ENCODE measurements at regions of chr11 and their contacts with region 1.

Region 1: GRCh38 chr11:102287964-102288724 is 29.1 kb upstream of the BIRC3 start:
- DNase-seq: peak; percentile 84
- ATAC-seq: peak; percentile 83
- H3K4me3 ChIP-seq: peak overlapping the region; percentile 27 to 70 (median 48)
- H3K4me3 Mint-ChIP-seq: peak overlapping the region; percentile 64
- H3K27ac ChIP-seq: peak overlapping the region in 1 of 2 donors; percentile 8
- H3K27ac Mint-ChIP-seq: peak overlapping the region; percentile 69
- H3K4me1 ChIP-seq: peaks cover 26 to 34% of the 10 kb centered on the region in 2 donors
- H3K4me1 Mint-ChIP-seq: peaks cover 46% of the 10 kb centered on the region
- H3K27me3 ChIP-seq: no peaks in the 10 kb centered on the region
- H3K27me3 Mint-ChIP-seq: no peaks in the 10 kb centered on the region
- CTCF ChIP-seq: peak; percentile 80

Region 2: DNA sequence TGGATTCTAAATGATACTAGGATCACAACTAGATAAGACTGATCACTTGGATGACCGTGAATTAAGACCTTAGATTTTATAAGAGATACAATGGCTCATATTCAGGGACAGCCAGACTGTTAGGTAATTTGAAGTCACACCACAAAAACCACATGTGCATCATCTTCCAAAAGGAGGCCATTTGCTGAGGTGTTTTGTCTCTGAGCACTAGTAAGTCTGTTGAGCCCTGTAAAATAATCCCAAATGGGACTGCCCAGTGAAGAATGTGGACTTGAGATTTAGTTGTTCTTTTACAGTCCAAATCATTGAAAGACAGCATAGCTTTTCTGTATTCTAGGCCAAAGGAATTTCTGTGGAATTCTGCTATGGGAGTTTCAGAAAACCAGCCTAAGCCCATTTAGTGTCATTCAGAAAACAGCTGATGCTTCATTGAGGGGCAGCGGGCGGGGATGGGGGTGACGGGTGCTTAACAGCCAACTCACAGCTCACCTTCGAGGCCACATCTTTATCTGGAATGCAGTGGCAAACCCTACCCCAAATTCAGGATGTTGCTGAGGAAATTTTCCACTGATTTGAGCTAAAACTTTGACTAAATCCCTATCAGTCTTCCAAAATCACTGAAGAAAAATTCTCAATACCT is 50.9 kb before region 1 on chr11:
- CTCF ChIA-PET with region 1: no interaction called
- POLR2A ChIA-PET with region 1: no interaction called
- intact Hi-C with region 1: no loop called
- DNase-seq: no peak
- ATAC-seq: no peak
- H3K4me3 ChIP-seq: no peak overlapping the region
- H3K4me3 Mint-ChIP-seq: no peak overlapping the region
- H3K27ac ChIP-seq: no peak overlapping the region
- H3K27ac Mint-ChIP-seq: no peak overlapping the region
- H3K4me1 ChIP-seq: peaks cover 0 to 8% of the 10 kb centered on the region in 2 donors
- H3K4me1 Mint-ChIP-seq: peaks cover 6% of the 10 kb centered on the region
- H3K27me3 ChIP-seq: peaks cover 0 to 14% (median 4%) of the 10 kb centered on the region in 4 experiments
- H3K27me3 Mint-ChIP-seq: peaks cover 42% of the 10 kb centered on the region
- CTCF ChIP-seq: no peak

Region 3: GRCh38 chr11:102268329-102269193 is 19.6 kb before region 1 on chr11:
- CTCF ChIA-PET with region 1: interaction called, 19 read pairs
- POLR2A ChIA-PET with region 1: no interaction called
- intact Hi-C with region 1: no loop called
- DNase-seq: peak; percentile 85
- ATAC-seq: peak; percentile 99
- H3K4me3 ChIP-seq: peak overlapping the region in 4 of 5 experiments; percentile 1 to 62 (median 36)
- H3K4me3 Mint-ChIP-seq: peak overlapping the region; percentile 78
- H3K27ac ChIP-seq: no peak overlapping the region
- H3K27ac Mint-ChIP-seq: peak overlapping the region; percentile 12
- H3K4me1 ChIP-seq: peaks cover 13 to 17% of the 10 kb centered on the region in 2 donors
- H3K4me1 Mint-ChIP-seq: peaks cover 23% of the 10 kb centered on the region
- H3K27me3 ChIP-seq: peaks cover 0 to 17% (median 11%) of the 10 kb centered on the region in 4 experiments
- H3K27me3 Mint-ChIP-seq: peaks cover 22% of the 10 kb centered on the region
- CTCF ChIP-seq: peak; percentile 31

Region 4: GRCh38 chr11:102323542-102324251 is 35.6 kb after region 1 on chr11:
- CTCF ChIA-PET with region 1: interaction called, 588 read pairs
- POLR2A ChIA-PET with region 1: interaction called, 105 read pairs
- intact Hi-C with region 1: loop called (anchors 1 kb)
- DNase-seq: no peak
- ATAC-seq: no peak
- H3K4me3 ChIP-seq: peak overlapping the region in 1 of 5 experiments; percentile 9
- H3K4me3 Mint-ChIP-seq: peak overlapping the region; percentile 32
- H3K27ac ChIP-seq: peak overlapping the region in 1 of 2 donors; percentile 98
- H3K27ac Mint-ChIP-seq: peak overlapping the region; percentile 65
- H3K4me1 ChIP-seq: peaks cover 38 to 50% of the 10 kb centered on the region in 2 donors
- H3K4me1 Mint-ChIP-seq: peaks cover 52% of the 10 kb centered on the region
- H3K27me3 ChIP-seq: no peaks in the 10 kb centered on the region
- H3K27me3 Mint-ChIP-seq: no peaks in the 10 kb centered on the region
- CTCF ChIP-seq: no peak

Region 5: DNA sequence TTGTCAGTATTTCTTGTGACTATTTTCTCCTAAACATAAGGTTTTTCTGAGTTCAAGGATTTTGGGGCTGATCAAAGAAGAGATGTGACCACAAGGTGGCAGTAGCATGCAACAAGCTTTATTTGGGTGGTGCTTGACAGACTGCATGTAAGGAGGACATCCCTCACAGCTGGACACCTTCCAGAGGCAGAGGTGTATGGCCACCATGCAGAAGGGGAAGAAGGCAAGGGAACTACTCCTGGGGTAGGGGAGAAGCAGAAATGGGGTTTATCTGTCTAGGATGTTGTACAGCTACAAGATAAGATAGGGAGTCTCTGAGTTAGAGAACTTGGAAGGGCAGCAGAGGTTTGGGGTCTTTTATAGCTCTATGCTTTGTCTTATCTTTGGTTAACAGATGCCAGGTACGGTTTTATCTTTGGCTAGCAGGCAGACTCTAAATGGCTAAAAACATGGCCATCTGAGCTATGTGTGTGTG is 53.7 kb after region 1 on chr11:
- CTCF ChIA-PET with region 1: interaction called, 295 read pairs
- POLR2A ChIA-PET with region 1: interaction called, 4 read pairs
- intact Hi-C with region 1: loop called (anchors 1 kb)
- DNase-seq: peak; percentile 84
- ATAC-seq: peak; percentile 48
- H3K4me3 ChIP-seq: no peak overlapping the region
- H3K4me3 Mint-ChIP-seq: no peak overlapping the region
- H3K27ac ChIP-seq: peak overlapping the region; percentile 19 to 75
- H3K27ac Mint-ChIP-seq: peak overlapping the region; percentile 43
- H3K4me1 ChIP-seq: peaks cover 14 to 16% of the 10 kb centered on the region in 2 donors
- H3K4me1 Mint-ChIP-seq: peaks cover 42% of the 10 kb centered on the region
- H3K27me3 ChIP-seq: no peaks in the 10 kb centered on the region
- H3K27me3 Mint-ChIP-seq: no peaks in the 10 kb centered on the region
- CTCF ChIP-seq: peak; percentile 80

Region 6: DNA sequence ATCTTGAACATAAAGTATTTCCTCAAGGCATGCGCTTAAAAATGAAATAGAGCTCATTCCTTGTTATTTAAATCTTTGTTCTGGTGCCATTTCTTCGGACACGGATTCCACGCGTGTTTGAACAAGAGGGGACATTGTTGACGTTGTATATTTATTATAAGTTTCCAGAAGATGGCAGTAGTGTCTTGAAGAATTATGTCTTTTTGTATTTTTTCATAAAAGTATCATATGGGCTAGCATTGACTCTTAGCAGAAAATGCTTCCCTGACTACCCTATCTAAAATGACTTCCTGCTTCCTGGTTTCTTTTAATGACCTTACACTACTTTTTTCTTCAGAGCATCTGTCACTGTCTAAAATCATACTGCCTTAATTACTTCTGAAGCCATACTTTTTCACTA is 79.2 kb after region 1 on chr11:
- CTCF ChIA-PET with region 1: interaction called, 20 read pairs
- POLR2A ChIA-PET with region 1: no interaction called
- intact Hi-C with region 1: loop called (anchors 1 kb)
- DNase-seq: peak; percentile 47
- ATAC-seq: no peak
- H3K4me3 ChIP-seq: no peak overlapping the region
- H3K4me3 Mint-ChIP-seq: no peak overlapping the region
- H3K27ac ChIP-seq: peak overlapping the region in 1 of 2 donors; percentile 48
- H3K27ac Mint-ChIP-seq: peak overlapping the region; percentile 1
- H3K4me1 ChIP-seq: no peaks in the 10 kb centered on the region
- H3K4me1 Mint-ChIP-seq: peaks cover 16% of the 10 kb centered on the region
- H3K27me3 ChIP-seq: no peaks in the 10 kb centered on the region
- H3K27me3 Mint-ChIP-seq: no peaks in the 10 kb centered on the region
- CTCF ChIP-seq: peak; percentile 61

Region 7: GRCh38 chr11:102410382-102410784 is 122.2 kb after region 1 on chr11:
- CTCF ChIA-PET with region 1: interaction called, 3 read pairs
- POLR2A ChIA-PET with region 1: interaction called, 11 read pairs
- intact Hi-C with region 1: no loop called
- DNase-seq: no peak
- ATAC-seq: no peak
- H3K4me3 ChIP-seq: no peak overlapping the region
- H3K4me3 Mint-ChIP-seq: no peak overlapping the region
- H3K27ac ChIP-seq: no peak overlapping the region
- H3K27ac Mint-ChIP-seq: no peak overlapping the region
- H3K4me1 ChIP-seq: peaks cover 6% of the 10 kb centered on the region in 2 donors
- H3K4me1 Mint-ChIP-seq: peaks cover 46% of the 10 kb centered on the region
- H3K27me3 ChIP-seq: no peaks in the 10 kb centered on the region
- H3K27me3 Mint-ChIP-seq: no peaks in the 10 kb centered on the region
- CTCF ChIP-seq: no peak

Region 8: DNA sequence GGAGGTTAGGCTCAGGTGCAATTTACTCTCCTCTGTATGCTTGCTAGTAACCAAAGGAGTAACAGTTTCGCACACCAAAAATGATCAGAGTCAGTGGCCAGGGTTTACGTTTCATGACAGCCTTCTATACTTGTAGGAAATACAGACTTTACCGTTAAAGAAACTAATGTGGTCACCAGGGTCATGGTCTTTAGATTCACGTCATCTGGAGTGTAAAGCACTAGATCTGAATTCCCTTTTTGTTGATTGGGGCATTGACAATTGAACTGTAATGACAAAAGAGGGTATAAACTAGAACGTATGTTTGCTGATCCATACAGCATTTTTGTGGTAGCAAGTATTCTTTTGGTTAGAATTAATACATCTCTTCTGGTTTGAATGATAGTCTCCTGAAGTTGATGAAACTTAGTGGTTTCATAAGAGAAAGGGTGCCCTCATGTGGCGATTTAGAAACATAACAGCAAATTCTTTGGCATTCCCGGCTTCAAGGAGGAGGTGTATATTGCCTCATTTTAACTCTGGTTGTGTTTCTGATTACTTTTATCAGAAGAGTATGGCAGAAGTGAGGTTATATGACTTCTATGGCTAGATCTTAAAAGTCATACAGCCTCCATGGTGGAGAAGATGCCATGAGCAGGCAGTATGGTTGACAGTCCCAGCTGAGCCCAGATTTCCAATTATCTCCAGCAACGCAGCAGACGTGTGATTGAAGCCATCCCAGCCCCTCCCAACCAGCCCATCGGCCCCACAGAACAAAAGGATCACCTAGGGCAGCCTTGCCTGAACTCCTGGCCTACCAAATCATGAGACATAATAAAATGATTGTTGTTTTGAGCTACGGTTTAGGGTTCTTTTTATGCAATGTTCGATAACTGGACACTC is 207.3 kb after region 1 on chr11:
- CTCF ChIA-PET with region 1: interaction called, 32 read pairs
- POLR2A ChIA-PET with region 1: no interaction called
- intact Hi-C with region 1: loop called (anchors 1 kb)
- DNase-seq: peak; percentile 86
- ATAC-seq: peak; percentile 73
- H3K4me3 ChIP-seq: no peak overlapping the region
- H3K4me3 Mint-ChIP-seq: peak overlapping the region; percentile 55
- H3K27ac ChIP-seq: no peak overlapping the region
- H3K27ac Mint-ChIP-seq: peak overlapping the region; percentile 50
- H3K4me1 ChIP-seq: peaks cover 0 to 7% of the 10 kb centered on the region in 2 donors
- H3K4me1 Mint-ChIP-seq: peaks cover 14% of the 10 kb centered on the region
- H3K27me3 ChIP-seq: no peaks in the 10 kb centered on the region
- H3K27me3 Mint-ChIP-seq: no peaks in the 10 kb centered on the region
- CTCF ChIP-seq: peak; percentile 81

Measured in B cell (primary cell).